SK-N-SH (cell line): ENCODE measurements at regions of chr16 and their contacts with region 1.

Region 1: DNA sequence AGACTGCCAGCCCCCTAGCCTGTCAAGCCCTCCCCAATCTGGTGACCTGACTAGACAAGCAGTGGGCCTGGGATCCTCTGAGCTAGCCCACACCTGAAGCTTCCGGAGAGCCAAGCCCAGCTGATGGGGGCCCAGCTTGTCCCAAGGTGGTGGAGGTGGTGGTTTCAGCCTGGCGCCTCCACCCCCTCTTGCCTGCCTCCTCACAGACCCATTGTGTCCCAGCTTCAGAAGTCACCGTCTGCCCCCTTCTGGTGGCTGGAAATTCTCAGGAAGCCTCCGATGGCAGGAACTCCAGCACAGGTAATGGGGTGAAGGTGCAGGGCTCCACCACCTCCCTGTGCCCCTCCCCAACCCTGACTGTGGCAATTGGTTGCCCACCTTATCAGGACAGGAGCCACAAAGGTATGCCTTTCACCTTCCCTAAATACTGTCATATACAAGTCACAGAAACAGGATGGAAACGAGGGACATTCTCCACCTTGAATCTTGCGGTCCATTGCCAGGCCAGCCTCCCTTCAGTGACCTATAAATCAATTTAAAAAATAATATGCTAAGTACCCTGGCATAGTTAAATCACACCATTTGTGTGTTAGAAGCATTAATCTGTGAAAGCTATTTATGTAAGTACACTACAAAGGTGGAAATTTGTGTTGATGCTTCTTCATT is 66.0 kb upstream of the ZNF423 start:
- DNase-seq: peak; percentile 86
- H3K4me3 ChIP-seq: no peak overlapping the region
- H3K27ac ChIP-seq: no peak overlapping the region
- H3K4me1 ChIP-seq: peaks cover 0 to 3% of the 10 kb centered on the region in 2 experiments; a peak in 1 of 4 replicates
- H3K27me3 ChIP-seq: no peaks in the 10 kb centered on the region
- CTCF ChIP-seq: peak; percentile 65
- EP300 ChIP-seq: no peak
- RAD21 ChIP-seq: peak; percentile 92

Region 2: DNA sequence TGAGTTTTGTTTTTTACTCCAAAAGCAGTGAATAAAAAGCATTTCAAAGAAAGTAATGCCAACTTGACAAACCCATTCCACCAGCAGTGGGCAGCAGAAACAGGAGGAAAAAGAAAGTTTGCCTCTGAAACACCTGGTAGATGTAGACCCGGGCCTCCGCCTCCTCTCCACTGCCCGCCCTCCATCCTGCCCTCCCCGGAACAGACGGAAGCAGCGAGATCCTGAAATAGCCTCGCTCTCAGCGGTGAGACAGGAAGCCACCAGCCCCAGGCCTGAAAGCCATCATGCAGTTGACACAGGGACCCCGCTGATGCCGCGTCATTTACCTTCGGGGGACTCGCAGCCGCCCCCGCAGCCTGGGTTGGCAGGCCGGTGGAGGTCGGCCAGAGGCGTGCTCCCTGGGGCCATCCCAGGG is 480.6 kb before region 1 on chr16:
- CTCF ChIA-PET with region 1: interaction called, 11 read pairs
- POLR2A ChIA-PET with region 1: no interaction called
- DNase-seq: peak; percentile 53
- H3K4me3 ChIP-seq: no peak overlapping the region
- H3K27ac ChIP-seq: no peak overlapping the region
- H3K4me1 ChIP-seq: no peaks in the 10 kb centered on the region; a peak in 1 of 4 replicates
- H3K27me3 ChIP-seq: no peaks in the 10 kb centered on the region
- CTCF ChIP-seq: no peak
- EP300 ChIP-seq: no peak
- RAD21 ChIP-seq: peak; percentile 32; the same call in 1 of the 2 replicates

Region 3: DNA sequence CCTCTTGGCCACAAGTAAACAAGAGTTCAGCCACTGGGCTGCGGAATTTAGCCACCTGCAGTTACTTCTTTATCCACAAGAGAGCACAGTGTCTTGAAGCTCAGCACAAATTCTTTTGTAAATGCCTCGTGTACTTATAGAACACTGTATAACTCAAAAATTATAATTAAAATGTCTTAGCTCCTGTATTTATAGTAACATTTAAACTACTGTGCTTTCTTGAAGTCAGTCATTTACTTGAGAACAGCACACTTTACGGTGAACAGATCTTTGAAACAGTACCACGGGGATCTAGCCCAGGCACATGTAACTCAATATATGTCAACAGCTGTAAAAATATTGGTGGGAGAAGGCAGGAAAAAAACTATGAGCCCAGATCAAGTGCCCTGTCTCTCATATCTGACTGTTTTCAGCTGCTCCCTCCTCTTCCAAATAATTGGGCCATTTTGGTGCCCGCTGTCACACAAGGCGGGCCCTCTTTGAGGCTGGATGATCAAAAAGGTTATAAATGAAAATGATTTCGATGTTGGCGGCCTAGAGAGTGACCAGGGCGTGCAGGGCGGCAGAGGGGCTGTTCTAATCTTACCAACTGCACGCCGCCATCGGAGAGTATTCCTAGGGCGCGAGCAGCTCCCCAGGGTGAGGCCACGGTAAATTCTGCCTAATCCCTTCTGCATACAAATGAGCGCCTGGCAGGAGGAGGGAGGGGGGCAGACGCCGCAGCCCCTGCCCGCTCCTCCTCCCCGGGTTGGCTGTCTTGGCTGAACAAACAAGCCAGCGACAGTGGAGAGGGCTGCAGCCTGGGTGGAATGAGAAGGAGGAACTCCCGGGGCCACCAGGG is 365.1 kb before region 1 on chr16:
- CTCF ChIA-PET with region 1: interaction called, 13 read pairs
- POLR2A ChIA-PET with region 1: no interaction called
- DNase-seq: no peak
- H3K4me3 ChIP-seq: no peak overlapping the region; a peak in 1 of 4 replicates
- H3K27ac ChIP-seq: peak overlapping the region in 1 of 2 experiments; percentile 11; a peak in 1 of 4 replicates
- H3K4me1 ChIP-seq: peaks cover 0 to 34% of the 10 kb centered on the region in 2 experiments; a peak in 3 of 4 replicates
- H3K27me3 ChIP-seq: peaks cover 4% of the 10 kb centered on the region; the same call in 1 of the 2 replicates
- CTCF ChIP-seq: peak; percentile 62
- EP300 ChIP-seq: no peak
- RAD21 ChIP-seq: peak; percentile 55

Region 4: DNA sequence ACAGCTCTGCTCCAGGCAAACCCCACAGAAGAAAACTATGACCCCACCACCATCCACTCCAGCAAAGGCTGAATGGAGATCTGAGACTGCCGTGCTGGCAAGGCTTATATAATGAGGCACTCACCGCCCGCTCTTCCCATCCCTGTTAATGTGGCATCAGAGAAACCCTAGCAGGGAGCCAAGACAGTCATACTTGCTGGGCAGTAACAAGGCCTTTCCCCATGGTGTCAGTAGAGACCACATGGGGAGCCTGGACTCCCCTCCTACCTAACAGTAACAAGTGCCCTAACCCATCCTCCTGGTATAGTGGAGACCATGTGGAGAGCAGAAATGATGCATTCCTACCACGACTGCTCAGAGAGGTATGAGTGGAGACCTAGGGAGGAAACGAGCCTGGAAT is 313.1 kb before region 1 on chr16:
- CTCF ChIA-PET with region 1: interaction called, 10 read pairs
- POLR2A ChIA-PET with region 1: no interaction called
- DNase-seq: peak; percentile 48
- H3K4me3 ChIP-seq: no peak overlapping the region
- H3K27ac ChIP-seq: peak overlapping the region in 1 of 2 experiments; percentile 20; a peak in 1 of 4 replicates
- H3K4me1 ChIP-seq: peaks cover 0 to 44% of the 10 kb centered on the region in 2 experiments; a peak in 2 of 4 replicates
- H3K27me3 ChIP-seq: no peaks in the 10 kb centered on the region
- CTCF ChIP-seq: peak; percentile 56
- EP300 ChIP-seq: no peak
- RAD21 ChIP-seq: peak; percentile 78

Region 5: GRCh38 chr16:49861299-49861698 is 60.6 kb before region 1 on chr16:
- CTCF ChIA-PET with region 1: interaction called, 94 read pairs
- POLR2A ChIA-PET with region 1: interaction called, 4 read pairs
- DNase-seq: no peak
- H3K4me3 ChIP-seq: no peak overlapping the region
- H3K27ac ChIP-seq: no peak overlapping the region
- H3K4me1 ChIP-seq: peaks cover 0 to 9% of the 10 kb centered on the region in 2 experiments; a peak in 1 of 4 replicates
- H3K27me3 ChIP-seq: peaks cover 9% of the 10 kb centered on the region
- CTCF ChIP-seq: no peak
- EP300 ChIP-seq: no peak
- RAD21 ChIP-seq: no peak

Region 6: GRCh38 chr16:49910541-49911071 is 11.3 kb before region 1 on chr16:
- CTCF ChIA-PET with region 1: interaction called, 49 read pairs
- POLR2A ChIA-PET with region 1: no interaction called
- DNase-seq: peak; percentile 67
- H3K4me3 ChIP-seq: no peak overlapping the region
- H3K27ac ChIP-seq: no peak overlapping the region
- H3K4me1 ChIP-seq: peaks cover 0 to 9% of the 10 kb centered on the region in 2 experiments; a peak in 1 of 4 replicates
- H3K27me3 ChIP-seq: no peaks in the 10 kb centered on the region; the same call in 1 of the 2 replicates
- CTCF ChIP-seq: no peak
- EP300 ChIP-seq: no peak
- RAD21 ChIP-seq: no peak

Region 7: DNA sequence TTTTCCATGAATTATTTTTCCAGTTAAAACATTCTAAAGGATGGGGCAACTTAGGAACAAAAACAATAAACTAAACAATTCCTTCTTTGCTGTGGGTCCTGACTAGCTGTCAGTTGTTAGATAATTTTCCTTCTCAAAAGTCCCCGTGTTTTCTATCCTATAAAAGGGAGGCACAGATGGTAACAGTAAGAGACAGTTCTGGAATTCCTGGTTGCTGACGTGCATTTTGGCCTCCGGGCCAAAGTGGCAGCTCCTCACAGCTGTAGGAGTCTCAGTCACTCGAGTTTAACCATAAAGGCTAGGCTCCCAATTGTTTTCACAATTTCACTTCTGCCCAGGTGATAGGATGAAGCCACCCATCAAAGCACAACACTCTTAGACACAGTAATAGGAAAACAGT is 11.0 kb after region 1 on chr16:
- CTCF ChIA-PET with region 1: interaction called, 28 read pairs
- POLR2A ChIA-PET with region 1: no interaction called
- DNase-seq: no peak
- H3K4me3 ChIP-seq: no peak overlapping the region
- H3K27ac ChIP-seq: no peak overlapping the region
- H3K4me1 ChIP-seq: no peaks in the 10 kb centered on the region
- H3K27me3 ChIP-seq: no peaks in the 10 kb centered on the region; the same call in 1 of the 2 replicates
- CTCF ChIP-seq: no peak
- EP300 ChIP-seq: no peak
- RAD21 ChIP-seq: no peak

Region 8: GRCh38 chr16:49980166-49980565 is 58.2 kb after region 1 on chr16:
- CTCF ChIA-PET with region 1: no interaction called
- POLR2A ChIA-PET with region 1: no interaction called
- DNase-seq: no peak
- H3K4me3 ChIP-seq: no peak overlapping the region
- H3K27ac ChIP-seq: no peak overlapping the region
- H3K4me1 ChIP-seq: no peaks in the 10 kb centered on the region
- H3K27me3 ChIP-seq: no peaks in the 10 kb centered on the region
- CTCF ChIP-seq: no peak
- EP300 ChIP-seq: no peak
- RAD21 ChIP-seq: no peak